HepG2 (cell line): ENCODE measurements at regions of chr12 and their contacts with region 1.

Region 1: DNA sequence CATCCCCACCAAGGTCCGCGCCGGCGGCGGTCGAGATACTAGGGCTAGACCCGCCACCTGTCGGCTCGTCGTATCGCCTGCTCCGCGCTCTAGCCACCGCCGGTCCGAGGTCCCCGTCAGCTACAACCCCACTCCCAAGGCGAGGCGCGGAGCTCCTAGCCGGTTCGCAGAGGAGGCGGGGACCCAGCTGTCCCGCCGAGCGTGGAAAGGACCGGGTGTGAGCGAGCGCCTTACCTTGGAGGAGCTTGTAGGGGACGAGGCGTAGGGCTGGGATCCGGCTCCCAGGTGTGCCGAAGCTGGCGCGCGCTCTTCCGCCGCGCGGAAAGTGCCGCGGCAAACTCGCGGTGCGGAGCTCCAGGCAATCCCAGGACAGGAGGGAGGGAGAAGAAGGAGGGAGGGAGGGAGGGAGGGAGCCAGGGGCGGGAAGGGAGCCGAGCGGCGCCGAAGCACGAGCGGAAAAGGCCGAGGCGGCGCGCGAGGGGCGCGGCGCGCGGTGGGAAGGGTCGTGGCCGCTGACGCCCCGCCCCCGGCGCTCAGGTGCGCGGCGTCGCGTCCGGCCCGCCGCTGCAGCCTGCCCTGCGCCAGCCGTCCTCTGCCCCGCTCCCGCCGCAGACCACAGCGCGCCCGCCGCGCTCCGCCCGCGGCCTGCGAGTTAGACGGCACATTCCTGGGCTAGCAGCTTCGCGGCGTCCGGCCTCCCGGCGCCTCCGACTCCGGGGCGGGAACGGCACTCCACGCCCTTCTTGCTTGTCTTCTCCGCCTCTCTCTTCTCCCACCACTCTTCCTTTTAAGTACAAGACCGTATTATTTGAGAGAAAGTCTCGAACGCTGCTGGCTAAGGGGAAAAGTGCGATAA is at the start of gene PAWR:
- DNase-seq: peak; percentile 71
- ATAC-seq: peak; percentile 87
- H3K4me3 ChIP-seq: peak within 1 kb of the TSS; percentile 76 to 97 (median 96)
- H3K27ac ChIP-seq: peak within 1 kb of the TSS; percentile 99
- H3K4me1 ChIP-seq: peaks cover 17% of the 10 kb centered on the region
- H3K27me3 ChIP-seq: no peaks in the 10 kb centered on the region; a peak in 1 of 5 replicates
- CTCF ChIP-seq: peak; percentile 82
- EP300 ChIP-seq: no peak
- POLR2A ChIP-seq: peak; percentile 73 to 88
- RAD21 ChIP-seq: no peak; the same call in none of the 2 replicates
- total RNA-seq, gene PAWR: 36.1 and 37.4 TPM in 2 replicates

Region 2: DNA sequence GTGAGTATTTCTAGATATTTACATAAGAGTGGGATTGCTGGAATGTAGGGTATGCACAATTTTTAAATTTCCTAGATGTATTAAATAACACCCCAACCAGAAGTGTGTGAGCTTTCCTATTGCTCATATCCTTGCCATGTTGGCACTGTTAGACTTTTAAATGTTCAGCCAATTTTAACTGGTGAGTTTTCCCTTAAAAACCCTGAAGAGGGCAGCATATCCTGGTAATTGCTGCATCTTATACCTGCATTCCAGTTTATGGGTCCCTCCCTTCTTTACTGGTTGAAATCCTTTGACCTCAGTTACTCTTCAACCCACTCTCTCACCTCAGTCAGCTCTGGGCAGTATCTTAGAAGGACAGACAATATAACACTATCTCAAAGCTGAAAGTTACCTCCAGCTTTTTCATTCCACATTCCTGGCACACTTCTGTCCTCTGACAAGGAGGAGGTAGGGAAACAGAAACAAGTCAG is 270.7 kb before region 1 on chr12:
- CTCF ChIA-PET with region 1: no interaction called
- POLR2A ChIA-PET with region 1: interaction called, 3 read pairs
- in situ Hi-C with region 1: no loop called
- intact Hi-C with region 1: loop called (anchors 5 kb)
- DNase-seq: peak; percentile 73
- ATAC-seq: peak; percentile 72
- H3K4me3 ChIP-seq: no peak overlapping the region
- H3K27ac ChIP-seq: no peak overlapping the region
- H3K4me1 ChIP-seq: peaks cover 73% of the 10 kb centered on the region
- H3K27me3 ChIP-seq: no peaks in the 10 kb centered on the region
- CTCF ChIP-seq: peak; percentile 82
- EP300 ChIP-seq: no peak
- POLR2A ChIP-seq: no peak
- RAD21 ChIP-seq: peak; percentile 68

Region 3: DNA sequence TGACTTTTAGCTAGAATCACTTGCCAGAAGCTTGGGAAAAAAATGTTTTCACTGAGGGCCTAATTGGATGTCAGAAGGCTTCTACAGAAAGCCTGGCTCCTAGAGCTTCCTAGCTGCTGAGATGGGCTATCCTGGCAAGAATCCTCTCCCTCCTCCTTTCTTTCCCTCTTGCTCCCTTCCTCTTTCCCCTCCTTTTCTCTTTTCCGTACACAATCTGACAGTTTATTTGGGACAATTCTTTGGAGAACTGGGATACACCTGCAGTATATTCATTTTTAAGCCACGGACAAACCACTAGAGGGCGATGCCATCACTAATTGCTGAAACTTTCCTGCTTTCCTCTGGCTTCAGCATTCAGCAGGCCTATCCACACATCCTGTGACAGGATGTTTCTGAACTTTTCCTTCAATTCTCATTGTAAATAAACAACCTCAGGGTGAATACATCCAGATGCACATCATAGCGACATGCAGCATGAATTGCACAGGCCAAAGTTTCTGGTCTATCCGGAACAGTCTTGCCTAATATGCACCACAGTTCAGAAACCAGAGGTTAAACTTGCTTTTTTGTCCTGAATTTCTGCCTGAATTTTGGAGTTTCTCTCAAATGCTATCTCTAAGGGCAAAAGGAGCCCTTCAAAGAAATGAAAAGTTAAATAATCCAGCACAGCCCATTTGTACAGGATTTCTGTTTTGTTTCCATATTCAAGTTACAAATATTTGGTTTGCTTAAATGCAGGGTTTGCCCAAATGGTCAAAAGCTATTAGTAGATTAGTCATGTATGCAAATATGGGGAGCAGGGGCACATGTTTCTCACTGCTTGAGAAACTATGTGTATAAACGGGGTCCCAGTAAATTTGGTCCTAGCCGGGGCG is 142.9 kb before region 1 on chr12:
- CTCF ChIA-PET with region 1: no interaction called
- POLR2A ChIA-PET with region 1: interaction called, 18 read pairs
- in situ Hi-C with region 1: loop called (anchors 25 kb)
- intact Hi-C with region 1: loop called (anchors 1 kb)
- DNase-seq: peak; percentile 91
- ATAC-seq: peak; percentile 78
- H3K4me3 ChIP-seq: peak overlapping the region in 1 of 3 experiments; percentile 1; a peak in 1 of 6 replicates
- H3K27ac ChIP-seq: peak overlapping the region; percentile 78
- H3K4me1 ChIP-seq: peaks cover 74% of the 10 kb centered on the region
- H3K27me3 ChIP-seq: no peaks in the 10 kb centered on the region
- CTCF ChIP-seq: peak; percentile 83
- EP300 ChIP-seq: peak in 1 of 2 experiments; percentile 90; a peak in 2 of 4 replicates
- POLR2A ChIP-seq: peak in 1 of 2 experiments; percentile 36; a peak in 1 of 4 replicates
- RAD21 ChIP-seq: no peak

Region 4: GRCh38 chr12:79560225-79560889 is 130.5 kb before region 1 on chr12:
- CTCF ChIA-PET with region 1: no interaction called
- POLR2A ChIA-PET with region 1: interaction called, 25 read pairs
- in situ Hi-C with region 1: loop called (anchors 25 kb)
- intact Hi-C with region 1: loop called (anchors 1 kb)
- DNase-seq: peak; percentile 93
- ATAC-seq: peak; percentile 95
- H3K4me3 ChIP-seq: no peak overlapping the region
- H3K27ac ChIP-seq: peak overlapping the region; percentile 89
- H3K4me1 ChIP-seq: peaks cover 60% of the 10 kb centered on the region
- H3K27me3 ChIP-seq: no peaks in the 10 kb centered on the region
- CTCF ChIP-seq: no peak
- EP300 ChIP-seq: peak; percentile 59 to 90
- POLR2A ChIP-seq: no peak
- RAD21 ChIP-seq: no peak

Region 5: DNA sequence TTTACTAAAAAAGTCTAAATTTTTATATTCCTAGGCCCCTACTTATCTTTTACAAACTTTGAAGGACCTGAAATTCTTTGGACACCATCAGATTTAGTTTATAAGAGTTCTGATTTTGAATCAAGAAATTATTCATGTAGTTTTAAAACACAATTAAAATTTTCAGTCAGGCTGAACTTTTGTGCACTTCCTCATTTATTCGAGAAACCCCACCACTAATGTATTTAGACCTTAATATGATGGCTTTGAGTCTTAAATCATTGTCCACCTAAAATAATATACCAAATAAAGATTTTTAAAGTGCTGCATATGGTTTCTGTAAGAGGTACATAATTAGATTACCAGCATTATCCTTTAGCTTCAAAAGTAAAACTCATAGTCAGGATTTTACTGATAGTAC is 103.5 kb before region 1 on chr12:
- CTCF ChIA-PET with region 1: no interaction called
- POLR2A ChIA-PET with region 1: no interaction called
- in situ Hi-C with region 1: no loop called
- intact Hi-C with region 1: no loop called
- DNase-seq: no peak
- ATAC-seq: no peak
- H3K4me3 ChIP-seq: no peak overlapping the region
- H3K27ac ChIP-seq: no peak overlapping the region
- H3K4me1 ChIP-seq: no peaks in the 10 kb centered on the region
- H3K27me3 ChIP-seq: no peaks in the 10 kb centered on the region
- CTCF ChIP-seq: no peak
- EP300 ChIP-seq: no peak
- POLR2A ChIP-seq: no peak
- RAD21 ChIP-seq: no peak

Region 6: DNA sequence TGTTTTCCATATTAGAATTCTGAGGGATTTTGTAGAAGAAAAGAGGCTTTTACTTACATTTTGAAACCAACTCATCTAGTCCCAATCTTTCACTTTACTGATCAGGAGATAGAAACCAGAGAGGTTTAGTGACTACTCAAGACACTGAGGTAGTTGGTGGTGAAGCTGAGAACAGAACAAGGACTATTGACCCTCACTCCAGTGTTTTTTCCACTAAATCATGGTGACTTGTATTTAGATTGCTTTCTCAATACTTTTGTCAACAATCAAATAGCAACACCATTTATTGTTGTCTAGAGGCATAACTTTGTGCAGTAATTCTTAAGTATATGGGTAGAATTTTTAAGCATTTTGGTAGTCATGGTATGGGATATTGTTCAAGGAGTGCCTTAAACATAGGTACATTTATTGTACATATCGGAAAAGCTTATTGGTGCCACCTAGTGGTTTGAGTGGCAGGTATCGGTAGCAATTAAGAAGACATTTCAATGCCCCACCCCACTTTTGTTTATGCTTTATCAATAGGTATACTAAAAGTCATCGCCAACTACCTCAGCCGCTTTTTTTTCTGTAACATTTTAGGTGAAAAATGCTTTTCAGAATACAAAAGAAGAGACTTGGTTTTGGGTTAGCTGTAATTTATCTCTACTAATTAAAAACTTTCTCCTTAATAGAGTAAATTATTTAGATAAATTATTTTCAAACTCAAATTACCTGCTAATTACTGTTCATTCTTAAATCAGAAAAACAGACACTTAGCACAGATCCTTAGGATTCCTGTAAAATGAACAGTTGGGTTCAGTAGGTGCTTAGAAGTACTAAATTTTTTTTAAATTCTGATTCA is 47.2 kb after region 1 on chr12:
- CTCF ChIA-PET with region 1: no interaction called
- POLR2A ChIA-PET with region 1: no interaction called
- in situ Hi-C with region 1: no loop called
- intact Hi-C with region 1: loop called (anchors 2 kb)
- DNase-seq: peak; percentile 68
- ATAC-seq: peak; percentile 84
- H3K4me3 ChIP-seq: no peak overlapping the region
- H3K27ac ChIP-seq: no peak overlapping the region
- H3K4me1 ChIP-seq: peaks cover 6% of the 10 kb centered on the region
- H3K27me3 ChIP-seq: no peaks in the 10 kb centered on the region
- CTCF ChIP-seq: peak; percentile 77
- EP300 ChIP-seq: no peak
- POLR2A ChIP-seq: no peak
- RAD21 ChIP-seq: peak; percentile 46; the same call in 1 of the 2 replicates